Heart left ventricle (tissue), 16 donors: ENCODE measurements at regions of chr2 and their contacts with region 1.

Region 1: GRCh38 chr2:27249891-27250651 is 12.8 kb downstream of the SLC30A3 start:
- DNase-seq: peak; percentile 43 to 78 (median 62)
- ATAC-seq: peak; percentile 62 to 88 (median 82)
- H3K4me3 ChIP-seq: no peak overlapping the region
- H3K27ac ChIP-seq: no peak overlapping the region
- H3K4me1 ChIP-seq: peaks cover 0 to 14% (median 4%) of the 10 kb centered on the region in 12 donors
- H3K27me3 ChIP-seq: peaks cover 0 to 32% (median 0%) of the 10 kb centered on the region in 9 donors
- CTCF ChIP-seq: peak; percentile 40 to 75 (median 68)
- POLR2A ChIP-seq: no peak

Region 2: GRCh38 chr2:25951071-25951547 is 1299.0 kb before region 1 on chr2:
- intact Hi-C with region 1: no loop called
- DNase-seq: peak; percentile 74 to 86 (median 80)
- ATAC-seq: peak; percentile 86 to 97 (median 95)
- H3K4me3 ChIP-seq: peak overlapping the region in 1 of 12 donors; percentile 26
- H3K27ac ChIP-seq: no peak overlapping the region
- H3K4me1 ChIP-seq: peaks cover 0 to 10% (median 0%) of the 10 kb centered on the region in 12 donors
- H3K27me3 ChIP-seq: no peaks in the 10 kb centered on the region
- CTCF ChIP-seq: peak; percentile 82 to 97 (median 94)
- POLR2A ChIP-seq: no peak

Region 3: GRCh38 chr2:27296481-27296880 is 46.4 kb after region 1 on chr2:
- intact Hi-C with region 1: loop called in 1 of 10 experiments (anchors 5 kb)
- DNase-seq: no peak
- ATAC-seq: no peak
- H3K4me3 ChIP-seq: no peak overlapping the region
- H3K27ac ChIP-seq: no peak overlapping the region
- H3K4me1 ChIP-seq: peaks cover 0 to 67% (median 16%) of the 10 kb centered on the region in 12 donors
- H3K27me3 ChIP-seq: peaks cover 0 to 3% (median 0%) of the 10 kb centered on the region in 9 donors
- CTCF ChIP-seq: no peak
- POLR2A ChIP-seq: no peak

Region 4: GRCh38 chr2:27303093-27304025 is 53.3 kb after region 1 on chr2:
- intact Hi-C with region 1: loop called in 4 of 10 experiments (anchors 1 to 5 kb)
- DNase-seq: peak in 3 of 5 donors; percentile 51 to 68 (median 63)
- ATAC-seq: peak; percentile 45 to 73 (median 60)
- H3K4me3 ChIP-seq: peak overlapping the region in 11 of 12 donors; percentile 4 to 52 (median 36)
- H3K27ac ChIP-seq: peak overlapping the region in 9 of 12 donors; percentile 27 to 66 (median 43)
- H3K4me1 ChIP-seq: peaks cover 0 to 30% (median 14%) of the 10 kb centered on the region in 12 donors
- H3K27me3 ChIP-seq: peaks cover 0 to 39% (median 23%) of the 10 kb centered on the region in 9 donors
- CTCF ChIP-seq: peak; percentile 75 to 92 (median 89)
- POLR2A ChIP-seq: no peak

Region 5: GRCh38 chr2:27453967-27454366 is 203.9 kb after region 1 on chr2:
- intact Hi-C with region 1: no loop called
- DNase-seq: no peak
- ATAC-seq: no peak
- H3K4me3 ChIP-seq: no peak overlapping the region
- H3K27ac ChIP-seq: no peak overlapping the region
- H3K4me1 ChIP-seq: no peaks in the 10 kb centered on the region
- H3K27me3 ChIP-seq: no peaks in the 10 kb centered on the region
- CTCF ChIP-seq: no peak
- POLR2A ChIP-seq: no peak